ENCODE measurements at regions of chr18 and their contacts with region 1.

Region 1: GRCh38 chr18:23623040-23623439 is 36.7 kb upstream of the NPC1 start:
- DNase-seq: no peak
- ATAC-seq: no peak

Region 2: GRCh38 chr18:23703057-23703986 is 80.3 kb after region 1 on chr18:
- intact Hi-C with region 1: loop called (anchors 5 kb)
- DNase-seq: no peak
- ATAC-seq: peak; percentile 83

Region 3: DNA sequence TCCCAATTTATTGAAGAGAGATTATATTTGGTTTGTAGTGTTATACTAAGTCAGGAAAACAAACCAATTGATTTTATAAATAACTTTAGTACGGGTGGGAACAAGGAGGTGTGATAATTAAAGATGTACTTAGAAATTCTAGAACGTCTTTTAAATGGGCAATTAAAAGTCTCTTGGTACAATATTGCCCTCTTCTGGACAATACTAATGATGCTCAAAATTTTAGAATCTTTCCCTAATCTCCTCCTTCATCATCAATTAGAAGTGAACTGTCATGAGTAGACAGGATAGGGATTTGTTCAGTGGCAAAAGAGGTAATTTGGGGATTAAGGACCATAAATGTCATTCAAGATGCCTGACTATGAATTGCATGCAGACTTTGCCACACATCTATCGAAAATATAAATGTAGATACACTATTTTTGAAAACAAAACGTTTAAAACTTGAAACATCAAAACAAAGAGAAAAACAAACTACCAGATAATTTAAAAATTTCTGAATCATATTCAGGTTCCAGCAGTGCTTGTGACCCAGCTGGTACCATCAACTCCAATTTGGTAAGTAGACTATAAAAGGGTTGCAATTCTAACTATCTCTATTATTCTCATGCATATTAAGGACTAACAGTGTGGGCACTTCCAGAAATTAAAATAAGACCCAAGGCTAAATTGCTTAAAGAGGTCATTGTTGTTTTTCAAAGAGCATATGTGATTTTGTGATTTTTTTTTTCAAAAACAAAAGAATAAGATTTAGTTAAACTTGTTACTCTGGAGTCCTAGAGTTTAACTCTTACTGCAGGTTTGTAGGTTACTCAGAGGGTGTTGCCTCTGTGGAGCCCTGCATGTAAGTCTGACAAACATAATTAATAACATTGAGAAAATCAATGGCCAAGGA is 189.8 kb after region 1 on chr18:
- intact Hi-C with region 1: loop called (anchors 5 kb)
- DNase-seq: no peak
- ATAC-seq: no peak

Measured in left ventricle myocardium superior (tissue), 1 donor.